Prostate gland (tissue), 2 donors: ENCODE measurements at regions of chr7 and their contacts with region 1.

Region 1: DNA sequence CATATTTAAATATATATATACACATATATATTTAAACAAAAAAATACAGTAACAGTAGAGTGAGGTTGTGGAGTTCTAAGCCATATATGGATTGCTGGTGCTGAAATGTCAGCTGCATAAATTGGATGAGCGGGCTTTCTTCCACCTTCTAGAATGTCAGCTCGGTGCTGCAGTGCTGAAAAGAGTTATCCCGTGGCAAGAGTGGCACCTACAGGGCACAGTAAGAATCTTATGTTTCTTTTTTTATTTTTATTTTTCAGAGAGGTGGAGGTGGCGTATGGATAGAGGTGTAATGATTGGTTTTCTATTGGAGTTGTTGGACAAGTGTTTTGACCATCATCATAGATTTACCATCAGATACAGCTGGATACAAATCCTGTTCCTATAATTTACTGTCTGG is 86.2 kb upstream of the DYNC1I1 start:
- DNase-seq: peak; percentile 56
- H3K4me3 ChIP-seq: no peak overlapping the region
- H3K27ac ChIP-seq: no peak overlapping the region
- H3K4me1 ChIP-seq: no peaks in the 10 kb centered on the region
- H3K27me3 ChIP-seq: no peaks in the 10 kb centered on the region
- CTCF ChIP-seq: peak in 3 of 4 experiments; percentile 49 to 67 (median 64)
- POLR2A ChIP-seq: no peak

Region 2: GRCh38 chr7:95376632-95377315 is 309.3 kb before region 1 on chr7:
- intact Hi-C with region 1: no loop called
- DNase-seq: no peak
- H3K4me3 ChIP-seq: no peak overlapping the region
- H3K27ac ChIP-seq: no peak overlapping the region
- H3K4me1 ChIP-seq: no peaks in the 10 kb centered on the region
- H3K27me3 ChIP-seq: no peaks in the 10 kb centered on the region
- CTCF ChIP-seq: no peak
- POLR2A ChIP-seq: no peak

Region 3: GRCh38 chr7:95511716-95512260 is 174.3 kb before region 1 on chr7:
- intact Hi-C with region 1: loop called (anchors 5 kb)
- DNase-seq: peak; percentile 56
- H3K4me3 ChIP-seq: no peak overlapping the region
- H3K27ac ChIP-seq: no peak overlapping the region
- H3K4me1 ChIP-seq: no peaks in the 10 kb centered on the region
- H3K27me3 ChIP-seq: no peaks in the 10 kb centered on the region
- CTCF ChIP-seq: peak; percentile 59 to 78 (median 75)
- POLR2A ChIP-seq: no peak

Region 4: GRCh38 chr7:95527033-95527775 is 158.9 kb before region 1 on chr7:
- intact Hi-C with region 1: loop called (anchors 2 kb)
- DNase-seq: peak; percentile 50
- H3K4me3 ChIP-seq: no peak overlapping the region
- H3K27ac ChIP-seq: no peak overlapping the region
- H3K4me1 ChIP-seq: no peaks in the 10 kb centered on the region
- H3K27me3 ChIP-seq: no peaks in the 10 kb centered on the region
- CTCF ChIP-seq: peak; percentile 78 to 90 (median 84)
- POLR2A ChIP-seq: no peak

Region 5: DNA sequence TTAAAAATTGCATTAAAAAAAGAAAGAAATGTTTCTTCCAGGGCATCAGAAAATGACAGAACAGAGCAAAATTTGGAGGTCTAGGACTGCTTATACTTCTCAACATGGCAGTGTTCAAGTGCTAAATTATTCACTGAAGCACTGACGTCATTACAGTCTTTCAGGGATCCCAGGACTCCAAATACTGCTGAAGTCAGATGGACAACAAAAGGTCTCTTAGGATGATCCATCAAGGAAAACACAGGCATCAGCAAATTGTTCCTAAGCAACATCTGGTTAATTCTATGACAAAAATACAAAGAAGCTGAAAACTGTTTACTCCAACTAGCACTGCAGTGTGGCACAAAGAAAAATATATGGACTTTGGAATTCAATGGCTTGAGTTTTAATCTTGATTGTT is 141.9 kb before region 1 on chr7:
- intact Hi-C with region 1: loop called (anchors 1 kb)
- DNase-seq: no peak
- H3K4me3 ChIP-seq: no peak overlapping the region
- H3K27ac ChIP-seq: peak overlapping the region in 1 of 2 donors; percentile 79
- H3K4me1 ChIP-seq: peaks cover 11% of the 10 kb centered on the region
- H3K27me3 ChIP-seq: no peaks in the 10 kb centered on the region
- CTCF ChIP-seq: no peak
- POLR2A ChIP-seq: no peak

Region 6: GRCh38 chr7:95608359-95609173 is 77.5 kb before region 1 on chr7:
- intact Hi-C with region 1: loop called (anchors 5 kb)
- DNase-seq: peak; percentile 75
- H3K4me3 ChIP-seq: no peak overlapping the region
- H3K27ac ChIP-seq: peak overlapping the region; percentile 69 to 71
- H3K4me1 ChIP-seq: peaks cover 10% of the 10 kb centered on the region
- H3K27me3 ChIP-seq: no peaks in the 10 kb centered on the region
- CTCF ChIP-seq: no peak
- POLR2A ChIP-seq: no peak

Region 7: DNA sequence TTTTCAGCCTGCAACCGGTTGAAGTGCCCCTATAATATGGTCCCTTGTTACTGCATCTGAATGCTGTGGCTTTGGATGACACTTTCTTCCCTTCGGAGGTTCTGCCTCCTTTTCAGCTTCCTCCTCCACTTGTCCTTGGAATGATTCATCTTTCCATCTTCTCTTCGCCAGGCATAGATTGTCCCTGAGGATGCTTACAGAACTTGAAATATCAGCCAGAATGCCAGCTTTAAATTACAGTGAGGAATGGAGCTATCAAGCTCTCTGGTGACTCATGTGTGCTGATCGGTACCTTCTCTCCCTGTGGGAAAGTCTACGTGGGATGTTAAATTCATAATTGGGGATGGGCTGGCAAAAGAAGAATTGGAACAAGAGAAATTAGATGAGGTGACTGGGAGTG is 43.9 kb before region 1 on chr7:
- intact Hi-C with region 1: no loop called
- DNase-seq: no peak
- H3K4me3 ChIP-seq: no peak overlapping the region
- H3K27ac ChIP-seq: no peak overlapping the region
- H3K4me1 ChIP-seq: no peaks in the 10 kb centered on the region
- H3K27me3 ChIP-seq: no peaks in the 10 kb centered on the region
- CTCF ChIP-seq: no peak
- POLR2A ChIP-seq: no peak